AG04450 (cell line): ENCODE measurements at regions of chr7 and their contacts with region 1.

Region 1: GRCh38 chr7:33932832-33933468 is 27.6 kb downstream of the BMPER start:
- DNase-seq: peak; percentile 61
- H3K4me3 ChIP-seq: no peak overlapping the region
- H3K27ac ChIP-seq: no peak overlapping the region
- H3K27me3 ChIP-seq: no peaks in the 10 kb centered on the region
- CTCF ChIP-seq: peak; percentile 99

Region 2: DNA sequence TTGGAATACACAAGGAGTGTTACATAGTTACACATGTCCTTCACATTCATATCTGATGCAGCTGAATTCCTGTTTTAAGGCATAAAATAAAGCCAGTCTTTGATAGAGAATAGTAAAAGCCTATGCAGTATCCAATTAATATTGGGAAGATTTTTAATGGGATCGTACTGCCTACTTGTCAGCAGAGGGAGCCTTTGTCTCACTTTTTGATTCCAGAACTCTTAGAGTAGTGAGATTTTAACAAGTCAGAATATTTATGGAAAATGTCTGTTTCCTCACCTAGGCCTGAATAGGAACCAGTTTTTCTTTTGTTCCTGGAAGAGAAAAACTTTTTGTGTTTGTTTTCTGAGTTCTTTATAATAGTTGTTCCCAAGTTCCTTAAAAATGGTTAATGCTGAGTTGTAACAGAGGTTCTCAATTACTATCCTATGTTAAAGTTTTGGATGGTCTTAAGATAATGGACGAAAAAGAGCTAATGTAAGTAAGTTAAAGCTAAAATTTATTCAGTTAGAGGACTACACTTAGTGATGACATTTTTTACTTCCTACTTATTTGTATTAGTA is 689.5 kb before region 1 on chr7:
- CTCF ChIA-PET with region 1: interaction called, 64 read pairs
- POLR2A ChIA-PET with region 1: no interaction called
- DNase-seq: peak; percentile 27
- H3K4me3 ChIP-seq: no peak overlapping the region
- H3K27ac ChIP-seq: no peak overlapping the region
- H3K27me3 ChIP-seq: no peaks in the 10 kb centered on the region
- CTCF ChIP-seq: peak; percentile 77

Region 3: DNA sequence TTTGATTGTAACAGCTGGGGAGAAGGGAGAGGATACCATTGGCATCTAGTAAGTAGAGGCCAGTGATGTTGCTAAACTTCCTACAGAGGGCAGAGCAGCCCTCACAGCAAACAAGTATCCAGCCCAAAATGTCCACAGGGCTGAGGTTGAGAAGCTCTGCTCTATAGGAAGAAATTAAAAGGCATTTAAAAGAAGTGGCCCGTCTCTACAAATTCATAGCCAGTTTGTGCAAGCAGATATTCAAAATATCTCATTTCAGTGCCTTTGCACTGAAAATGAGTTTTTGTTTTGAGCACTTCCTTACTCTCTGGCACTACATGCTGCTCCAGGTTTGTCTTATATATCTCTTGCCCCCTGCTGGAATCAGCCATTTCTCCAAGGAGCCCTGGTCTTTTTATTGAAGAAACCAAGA is 473.6 kb before region 1 on chr7:
- CTCF ChIA-PET with region 1: interaction called, 35 read pairs
- POLR2A ChIA-PET with region 1: no interaction called
- DNase-seq: peak; percentile 3
- H3K4me3 ChIP-seq: no peak overlapping the region
- H3K27ac ChIP-seq: no peak overlapping the region
- H3K27me3 ChIP-seq: no peaks in the 10 kb centered on the region
- CTCF ChIP-seq: peak; percentile 57

Region 4: DNA sequence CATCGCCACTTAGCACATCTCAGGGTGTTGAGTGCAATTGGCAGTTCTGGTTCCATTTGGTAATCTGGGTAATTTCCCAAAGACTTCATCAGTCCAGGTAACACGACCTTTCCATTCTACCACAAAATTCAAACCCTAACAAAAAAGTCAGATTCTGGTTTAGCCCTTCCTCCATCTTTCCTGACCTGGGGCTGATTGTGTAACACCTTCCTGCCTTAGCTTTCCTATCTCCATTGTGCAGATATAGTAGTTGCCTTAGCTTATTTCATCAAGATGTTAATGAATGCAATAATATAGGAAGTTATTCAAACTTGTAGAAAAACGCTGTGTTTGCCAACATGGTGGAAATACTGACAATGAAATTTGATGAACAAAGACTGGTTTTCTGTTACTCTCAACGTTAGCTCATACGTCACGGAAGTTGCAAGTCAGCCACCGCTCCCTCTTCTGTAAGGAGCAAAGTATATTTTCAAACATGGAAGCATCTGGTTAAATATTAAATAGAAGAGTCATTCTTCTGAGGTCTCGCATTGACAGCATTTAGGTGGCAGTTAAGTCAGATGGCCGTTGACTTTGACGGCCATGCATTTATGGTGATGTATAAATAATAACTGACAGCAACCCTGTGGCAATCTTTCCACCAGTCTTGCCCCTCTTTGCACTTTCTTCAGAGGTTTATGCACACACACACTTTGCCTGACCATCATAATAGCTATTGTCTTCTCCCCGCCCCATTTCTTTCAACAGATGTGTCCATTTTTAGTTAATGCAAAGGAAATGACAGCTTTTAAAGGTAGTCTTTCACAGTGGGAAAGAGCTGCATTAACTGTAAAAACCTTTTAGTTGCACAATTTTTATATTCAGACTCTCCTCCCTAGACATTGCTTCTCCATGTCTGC is 232.7 kb before region 1 on chr7:
- CTCF ChIA-PET with region 1: no interaction called
- POLR2A ChIA-PET with region 1: no interaction called
- DNase-seq: no peak
- H3K4me3 ChIP-seq: no peak overlapping the region
- H3K27ac ChIP-seq: no peak overlapping the region
- H3K27me3 ChIP-seq: no peaks in the 10 kb centered on the region
- CTCF ChIP-seq: no peak

Region 5: GRCh38 chr7:33807779-33808482 is 125.0 kb before region 1 on chr7:
- CTCF ChIA-PET with region 1: interaction called, 13 read pairs
- POLR2A ChIA-PET with region 1: no interaction called
- DNase-seq: no peak
- H3K4me3 ChIP-seq: no peak overlapping the region
- H3K27ac ChIP-seq: no peak overlapping the region
- H3K27me3 ChIP-seq: no peaks in the 10 kb centered on the region
- CTCF ChIP-seq: peak; percentile 42

Region 6: GRCh38 chr7:33921216-33921938 is 11.6 kb before region 1 on chr7:
- CTCF ChIA-PET with region 1: interaction called, 92 read pairs
- POLR2A ChIA-PET with region 1: no interaction called
- DNase-seq: peak; percentile 30
- H3K4me3 ChIP-seq: no peak overlapping the region
- H3K27ac ChIP-seq: no peak overlapping the region
- H3K27me3 ChIP-seq: peaks cover 4% of the 10 kb centered on the region
- CTCF ChIP-seq: no peak

Region 7: DNA sequence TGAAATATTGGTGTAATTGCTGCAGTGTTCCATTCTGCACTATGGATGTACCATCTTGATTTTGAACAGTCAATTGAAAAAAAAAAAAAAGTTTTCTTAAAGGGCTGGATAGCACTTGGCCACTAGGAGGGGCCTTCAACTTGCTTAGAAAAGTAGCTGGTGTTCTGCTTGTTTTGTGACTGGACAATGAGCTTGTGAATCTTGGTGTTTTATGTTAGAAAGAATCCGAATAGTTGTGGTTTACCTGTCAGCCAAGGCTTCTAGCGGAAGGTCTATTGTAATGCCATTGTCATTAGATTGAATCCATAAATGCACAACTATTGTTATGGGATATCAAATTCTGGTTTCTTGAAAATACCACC is 49.5 kb after region 1 on chr7:
- CTCF ChIA-PET with region 1: interaction called, 17 read pairs
- POLR2A ChIA-PET with region 1: no interaction called
- DNase-seq: no peak
- H3K4me3 ChIP-seq: no peak overlapping the region
- H3K27ac ChIP-seq: no peak overlapping the region
- H3K27me3 ChIP-seq: no peaks in the 10 kb centered on the region
- CTCF ChIP-seq: peak; percentile 72

Region 8: DNA sequence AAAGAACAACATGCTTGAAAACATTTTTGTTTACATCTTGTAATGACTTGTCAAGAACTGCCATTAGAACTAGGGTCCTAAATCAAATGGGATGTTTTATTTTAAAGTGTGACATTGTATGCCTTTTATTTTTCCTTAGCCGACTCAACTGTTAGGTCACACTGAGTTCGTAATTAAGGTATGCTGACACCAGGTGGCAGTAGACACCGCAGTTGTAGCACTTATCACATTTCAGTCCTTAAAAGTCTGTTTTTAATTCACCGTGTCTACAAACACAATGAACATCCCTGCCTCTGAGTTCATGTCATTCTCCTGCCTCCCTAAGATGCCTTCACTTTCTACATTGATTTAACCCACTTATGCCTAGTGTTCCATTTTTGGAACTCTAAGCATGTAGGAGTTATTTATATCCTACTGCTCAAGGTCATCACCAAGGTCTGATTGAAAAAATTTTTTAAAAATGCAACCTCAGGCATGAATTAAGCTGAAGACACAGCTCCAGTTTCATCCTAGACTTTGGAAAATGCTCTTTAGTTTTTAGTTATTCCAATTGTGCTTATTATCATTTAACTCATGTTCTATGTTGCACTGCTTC is 158.5 kb after region 1 on chr7:
- CTCF ChIA-PET with region 1: interaction called, 22 read pairs
- POLR2A ChIA-PET with region 1: no interaction called
- DNase-seq: peak; percentile 18
- H3K4me3 ChIP-seq: no peak overlapping the region
- H3K27ac ChIP-seq: no peak overlapping the region
- H3K27me3 ChIP-seq: no peaks in the 10 kb centered on the region
- CTCF ChIP-seq: peak; percentile 51